Activated T-helper 2 cell treated with anti-CD3 and anti-CD28 coated beads, Interferon-gamma antibody, Interleukin-2, Interleukin-4, amounts not matched to agents 10 μg/mL and 5 μg/mL and 100 μg/mL, durations not matched to agents 14 hours and 24 hours and 36 hours (primary cell): ENCODE measurements at regions of chrX and their contacts with region 1.

Region 1: DNA sequence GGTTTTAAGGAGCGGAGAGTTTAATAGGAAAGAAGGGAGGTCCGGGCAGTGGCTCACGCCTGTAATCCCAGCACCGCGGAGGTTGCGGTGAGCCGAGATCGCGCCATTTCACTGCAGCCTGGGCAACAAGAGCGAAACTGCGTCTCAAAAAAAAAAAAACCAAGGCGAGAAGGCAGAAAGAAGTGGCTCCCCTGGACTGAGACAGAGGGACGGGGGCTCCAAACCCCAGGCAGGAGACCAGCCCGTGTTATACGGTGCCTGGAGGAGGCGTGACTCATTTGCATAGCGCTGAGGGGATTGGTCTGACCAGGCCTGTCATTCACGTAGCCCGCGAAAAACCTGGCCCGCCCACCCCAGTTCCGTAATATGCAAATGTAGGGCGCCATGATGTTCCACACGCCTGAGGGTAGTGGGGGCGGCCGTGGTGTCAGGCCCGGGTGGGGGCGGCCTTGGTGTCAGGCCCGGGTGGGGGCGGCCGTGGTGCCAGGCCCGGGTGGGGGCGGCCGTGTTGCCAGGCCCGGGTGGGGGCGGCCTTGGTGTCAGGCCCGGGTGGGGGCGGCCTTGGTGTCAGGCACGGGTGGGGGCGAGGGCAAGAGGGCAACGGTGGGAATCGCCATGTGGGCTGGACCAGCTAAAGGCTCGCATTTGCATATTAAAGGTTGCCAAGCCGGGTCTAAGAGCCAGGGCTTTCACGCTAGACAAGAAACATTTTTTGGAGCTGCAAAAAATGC is 2.1 kb downstream of the PLCXD1 start:
- DNase-seq: peak; percentile 87
- H3K4me3 Mint-ChIP-seq: peak overlapping the region; percentile 91
- H3K27ac Mint-ChIP-seq: peak overlapping the region; percentile 97
- H3K4me1 Mint-ChIP-seq: peaks cover 15% of the 10 kb centered on the region
- H3K27me3 Mint-ChIP-seq: no peaks in the 10 kb centered on the region

Region 2: GRCh38 chrX:254630-255215 is 28.6 kb before region 1 on chrX:
- intact Hi-C with region 1: no loop called
- DNase-seq: no peak
- H3K4me3 Mint-ChIP-seq: no peak overlapping the region
- H3K27ac Mint-ChIP-seq: no peak overlapping the region
- H3K4me1 Mint-ChIP-seq: peaks cover 9% of the 10 kb centered on the region
- H3K27me3 Mint-ChIP-seq: no peaks in the 10 kb centered on the region

Region 3: GRCh38 chrX:386768-387575 is 103.7 kb after region 1 on chrX and contains the start of gene PPP2R3B:
- intact Hi-C with region 1: loop called (anchors 10 kb)
- DNase-seq: peak; percentile 99
- H3K4me3 Mint-ChIP-seq: peak within 1 kb of the TSS; percentile 84
- H3K27ac Mint-ChIP-seq: peak within 1 kb of the TSS; percentile 94
- H3K4me1 Mint-ChIP-seq: no peaks in the 10 kb centered on the region
- H3K27me3 Mint-ChIP-seq: no peaks in the 10 kb centered on the region
- total RNA-seq, gene PPP2R3B: 39.8 and 47.6 TPM in 2 replicates